Heart right ventricle (tissue), 16 donors: ENCODE measurements at regions of chr5 and their contacts with region 1.

Region 1: GRCh38 chr5:173057062-173057924 is 1.1 kb downstream of the CREBRF start:
- DNase-seq: peak; percentile 99
- ATAC-seq: peak; percentile 93 to 98 (median 97)
- H3K4me3 ChIP-seq: peak overlapping the region; percentile 85 to 100 (median 100)
- H3K27ac ChIP-seq: peak overlapping the region; percentile 94 to 99 (median 97)
- H3K4me1 ChIP-seq: peaks cover 0 to 53% (median 37%) of the 10 kb centered on the region in 9 donors
- H3K27me3 ChIP-seq: no peaks in the 10 kb centered on the region
- CTCF ChIP-seq: peak in 5 of 9 donors; percentile 19 to 37 (median 26)

Region 2: GRCh38 chr5:172984243-172984953 is 72.9 kb before region 1 on chr5:
- intact Hi-C with region 1: loop called in 7 of 10 experiments (anchors 1 to 10 kb)
- DNase-seq: peak; percentile 46 to 50
- ATAC-seq: peak; percentile 50 to 77 (median 66)
- H3K4me3 ChIP-seq: peak overlapping the region; percentile 65 to 95 (median 88)
- H3K27ac ChIP-seq: peak overlapping the region; percentile 86 to 95 (median 92)
- H3K4me1 ChIP-seq: peaks cover 0 to 43% (median 17%) of the 10 kb centered on the region in 9 donors
- H3K27me3 ChIP-seq: no peaks in the 10 kb centered on the region
- CTCF ChIP-seq: peak in 8 of 9 donors; percentile 18 to 56 (median 35)

Region 3: GRCh38 chr5:173010547-173011464 is 46.5 kb before region 1 on chr5:
- intact Hi-C with region 1: loop called in 2 of 10 experiments (anchors 5 kb)
- DNase-seq: peak; percentile 54 to 65
- ATAC-seq: peak; percentile 79 to 90 (median 88)
- H3K4me3 ChIP-seq: no peak overlapping the region
- H3K27ac ChIP-seq: peak overlapping the region in 5 of 10 donors; percentile 6 to 90 (median 14)
- H3K4me1 ChIP-seq: peaks cover 8 to 84% (median 38%) of the 10 kb centered on the region in 9 donors
- H3K27me3 ChIP-seq: no peaks in the 10 kb centered on the region
- CTCF ChIP-seq: peak; percentile 26 to 75 (median 68)

Region 4: GRCh38 chr5:173016621-173017047 is 40.7 kb before region 1 on chr5:
- intact Hi-C with region 1: loop called in 2 of 10 experiments (anchors 5 kb)
- DNase-seq: peak in 1 of 2 donors; percentile 42
- ATAC-seq: peak; percentile 63 to 92 (median 87)
- H3K4me3 ChIP-seq: no peak overlapping the region
- H3K27ac ChIP-seq: peak overlapping the region; percentile 3 to 90 (median 72)
- H3K4me1 ChIP-seq: peaks cover 2 to 95% (median 33%) of the 10 kb centered on the region in 9 donors
- H3K27me3 ChIP-seq: no peaks in the 10 kb centered on the region
- CTCF ChIP-seq: no peak

Region 5: DNA sequence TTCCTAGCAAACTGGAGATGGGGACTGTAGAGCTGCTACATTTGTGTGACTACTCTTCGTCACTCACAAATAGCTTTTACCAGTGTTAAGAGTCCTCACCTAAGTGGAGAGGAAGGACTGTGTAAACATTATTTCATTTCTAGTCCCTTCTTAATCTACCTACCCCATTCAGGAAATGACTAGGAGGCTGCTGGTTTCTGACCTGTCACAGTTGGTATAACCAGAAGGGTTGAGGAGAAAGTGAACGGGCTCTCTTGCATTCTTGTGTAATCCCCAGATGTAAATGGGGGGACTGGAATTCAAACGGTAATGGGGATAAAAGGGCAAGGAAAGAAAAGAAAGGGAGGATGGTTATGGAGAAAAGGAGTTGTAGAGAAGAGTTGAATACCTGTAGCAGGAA is 51.6 kb after region 1 on chr5:
- intact Hi-C with region 1: no loop called
- DNase-seq: no peak
- ATAC-seq: no peak
- H3K4me3 ChIP-seq: no peak overlapping the region
- H3K27ac ChIP-seq: no peak overlapping the region
- H3K4me1 ChIP-seq: peaks cover 0 to 10% (median 0%) of the 10 kb centered on the region in 9 donors
- H3K27me3 ChIP-seq: no peaks in the 10 kb centered on the region
- CTCF ChIP-seq: no peak